Activated CD8-positive, alpha-beta T cell treated with anti-CD3 and anti-CD28 coated beads, Interleukin-2, amount 10 ng/mL, durations not matched to agents 7 days and 5 days (primary cell): ENCODE measurements at regions of chr10 and their contacts with region 1.

Region 1: GRCh38 chr10:43407576-43408330 is 1.2 kb downstream of the HNRNPF start:
- DNase-seq: peak; percentile 89
- ATAC-seq: peak; percentile 42
- H3K4me3 Mint-ChIP-seq: peak overlapping the region; percentile 85
- H3K27ac Mint-ChIP-seq: peak overlapping the region; percentile 98
- H3K4me1 Mint-ChIP-seq: peaks cover 31% of the 10 kb centered on the region
- H3K27me3 Mint-ChIP-seq: no peaks in the 10 kb centered on the region

Region 2: GRCh38 chr10:43396928-43397624 is 10.7 kb before region 1 on chr10:
- CTCF ChIA-PET with region 1: interaction called, 5 read pairs
- POLR2A ChIA-PET with region 1: interaction called, 179 read pairs
- DNase-seq: peak; percentile 91
- ATAC-seq: peak; percentile 80
- H3K4me3 Mint-ChIP-seq: peak overlapping the region; percentile 82
- H3K27ac Mint-ChIP-seq: peak overlapping the region; percentile 91
- H3K4me1 Mint-ChIP-seq: peaks cover 73% of the 10 kb centered on the region
- H3K27me3 Mint-ChIP-seq: no peaks in the 10 kb centered on the region

Region 3: GRCh38 chr10:43420369-43421200 is 12.8 kb after region 1 on chr10:
- CTCF ChIA-PET with region 1: interaction called, 7 read pairs
- POLR2A ChIA-PET with region 1: interaction called, 32 read pairs
- DNase-seq: peak; percentile 91
- ATAC-seq: peak; percentile 90
- H3K4me3 Mint-ChIP-seq: peak overlapping the region; percentile 83
- H3K27ac Mint-ChIP-seq: peak overlapping the region; percentile 97
- H3K4me1 Mint-ChIP-seq: peaks cover 45% of the 10 kb centered on the region
- H3K27me3 Mint-ChIP-seq: no peaks in the 10 kb centered on the region

Region 4: DNA sequence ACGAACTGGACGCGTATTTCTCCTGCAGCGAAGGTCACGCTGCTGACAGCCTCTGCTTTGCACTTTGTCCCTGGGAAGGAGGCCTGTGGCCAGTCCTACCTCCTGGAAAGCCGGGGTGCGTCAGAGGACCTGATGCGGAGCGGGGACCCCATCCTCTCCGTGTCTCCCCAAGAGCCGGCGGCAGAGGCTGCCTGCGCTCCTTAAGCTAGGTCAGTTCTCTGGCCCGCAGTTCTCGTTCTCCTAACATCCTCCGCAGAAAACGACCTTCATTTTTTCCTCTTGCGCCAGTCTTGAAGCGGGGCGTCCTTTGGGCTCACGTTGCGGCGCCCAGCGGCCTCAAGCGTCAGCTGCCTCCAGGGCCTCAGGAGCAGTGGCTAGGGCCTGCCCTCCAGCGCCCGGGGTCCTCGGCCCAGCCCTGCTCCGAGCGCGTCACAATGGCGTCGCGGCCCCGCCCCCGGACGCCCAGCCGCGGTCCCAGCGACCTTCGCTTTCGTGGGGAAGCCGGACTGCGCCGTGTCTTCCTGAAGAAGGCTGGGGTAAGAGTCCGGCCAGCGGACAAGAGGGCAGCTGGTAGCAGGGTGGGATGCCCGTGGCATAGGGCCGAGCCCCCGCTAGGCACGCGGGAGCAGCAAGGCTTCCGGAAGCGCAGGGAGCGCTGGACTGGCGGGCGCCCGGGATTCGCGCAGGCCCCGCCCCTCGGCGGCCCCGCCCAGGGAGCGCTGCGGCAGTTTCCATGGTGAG is 28.8 kb after region 1 on chr10 and contains the start of gene ZNF487:
- CTCF ChIA-PET with region 1: no interaction called
- POLR2A ChIA-PET with region 1: interaction called, 11 read pairs
- DNase-seq: peak; percentile 92
- ATAC-seq: peak; percentile 95
- H3K4me3 Mint-ChIP-seq: peak within 1 kb of the TSS; percentile 96
- H3K27ac Mint-ChIP-seq: peak within 1 kb of the TSS; percentile 99
- H3K4me1 Mint-ChIP-seq: peaks cover 23% of the 10 kb centered on the region
- H3K27me3 Mint-ChIP-seq: no peaks in the 10 kb centered on the region
- total RNA-seq, gene ZNF487: 4.8 to 5.2 TPM

Region 5: GRCh38 chr10:43453266-43453831 is 45.6 kb after region 1 on chr10:
- CTCF ChIA-PET with region 1: interaction called, 8 read pairs
- POLR2A ChIA-PET with region 1: interaction called, 13 read pairs
- DNase-seq: peak; percentile 28
- ATAC-seq: no peak
- H3K4me3 Mint-ChIP-seq: peak overlapping the region; percentile 65
- H3K27ac Mint-ChIP-seq: peak overlapping the region; percentile 98
- H3K4me1 Mint-ChIP-seq: peaks cover 50% of the 10 kb centered on the region
- H3K27me3 Mint-ChIP-seq: no peaks in the 10 kb centered on the region